Activated T-helper 1 cell treated with anti-CD3 and anti-CD28 coated beads, Interleukin-12 subunit alpha, Interleukin-12 subunit beta, Interleukin-2, Interleukin-4 antibody, amounts not matched to agents 30 ng/mL and 10 ng/mL and 1 ng/mL, durations not matched to agents 14 hours and 24 hours and 36 hours (primary cell): ENCODE measurements at regions of chrX and their contacts with region 1.

Region 1: DNA sequence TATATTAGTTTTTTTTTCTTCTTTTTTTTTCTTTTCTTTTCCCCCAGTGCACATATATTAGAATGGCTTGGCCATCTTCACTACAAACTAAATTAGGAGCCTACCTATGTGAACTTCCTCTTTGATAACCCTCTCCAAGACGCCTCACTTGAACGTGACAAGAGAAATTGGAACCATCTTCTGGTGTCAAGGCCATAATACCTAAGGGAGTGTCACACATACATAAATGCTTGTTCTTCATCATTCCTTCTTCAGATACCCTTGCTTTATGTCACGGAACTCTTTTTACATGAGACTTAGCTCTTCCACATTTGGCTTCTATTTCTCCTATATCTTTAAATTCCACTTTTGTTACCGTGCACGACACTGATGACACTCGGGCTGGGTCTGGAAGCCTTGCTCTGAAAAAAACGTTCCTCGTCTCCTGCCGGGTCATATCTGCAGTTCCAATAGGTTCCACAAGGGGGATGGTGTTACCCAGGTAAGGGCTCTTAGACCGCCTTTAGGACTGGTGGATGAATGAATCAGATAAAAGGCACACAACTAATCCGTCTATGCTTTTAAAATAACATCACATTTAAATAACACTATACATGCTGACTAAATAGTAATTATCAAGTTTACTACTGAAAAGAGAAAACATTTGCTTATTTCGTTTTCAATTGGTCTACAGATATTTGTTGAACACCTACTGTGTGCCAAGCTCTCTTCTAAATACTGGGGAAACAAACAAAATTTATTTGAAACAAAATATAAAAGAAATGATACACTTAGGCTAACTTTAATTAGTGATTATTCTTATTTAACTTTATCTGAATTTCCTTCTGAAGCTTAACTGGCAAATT is 19.9 kb downstream of the DGAT2L6 start:
- DNase-seq: peak; percentile 43
- H3K4me3 Mint-ChIP-seq: no peak overlapping the region
- H3K27ac Mint-ChIP-seq: no peak overlapping the region
- H3K4me1 Mint-ChIP-seq: peaks cover 6% of the 10 kb centered on the region
- H3K27me3 Mint-ChIP-seq: peaks cover 4% of the 10 kb centered on the region

Region 2: DNA sequence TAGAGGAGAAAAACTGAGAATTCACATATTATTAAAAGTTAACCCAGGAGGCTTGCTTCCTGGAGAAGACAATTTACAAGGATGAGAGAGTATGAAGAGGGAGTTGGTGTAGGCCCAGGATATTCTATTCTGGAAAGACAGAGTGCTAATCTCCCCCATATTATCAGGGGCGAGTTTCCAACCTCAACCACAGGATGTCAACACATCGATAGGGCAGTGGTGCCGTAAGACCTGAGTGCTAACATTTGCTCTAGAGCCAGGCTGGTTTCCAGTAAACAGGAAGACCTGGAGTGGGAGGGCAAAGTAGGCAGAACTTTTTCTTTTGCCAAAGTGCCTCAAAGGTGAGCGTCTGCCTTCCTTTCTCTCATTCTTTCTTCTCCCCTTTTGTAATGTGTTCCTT is 34.5 kb after region 1 on chrX:
- intact Hi-C with region 1: loop called (anchors 1 kb)
- DNase-seq: no peak
- H3K4me3 Mint-ChIP-seq: no peak overlapping the region
- H3K27ac Mint-ChIP-seq: peak overlapping the region; percentile 19
- H3K4me1 Mint-ChIP-seq: peaks cover 13% of the 10 kb centered on the region
- H3K27me3 Mint-ChIP-seq: peaks cover 1% of the 10 kb centered on the region

Region 3: DNA sequence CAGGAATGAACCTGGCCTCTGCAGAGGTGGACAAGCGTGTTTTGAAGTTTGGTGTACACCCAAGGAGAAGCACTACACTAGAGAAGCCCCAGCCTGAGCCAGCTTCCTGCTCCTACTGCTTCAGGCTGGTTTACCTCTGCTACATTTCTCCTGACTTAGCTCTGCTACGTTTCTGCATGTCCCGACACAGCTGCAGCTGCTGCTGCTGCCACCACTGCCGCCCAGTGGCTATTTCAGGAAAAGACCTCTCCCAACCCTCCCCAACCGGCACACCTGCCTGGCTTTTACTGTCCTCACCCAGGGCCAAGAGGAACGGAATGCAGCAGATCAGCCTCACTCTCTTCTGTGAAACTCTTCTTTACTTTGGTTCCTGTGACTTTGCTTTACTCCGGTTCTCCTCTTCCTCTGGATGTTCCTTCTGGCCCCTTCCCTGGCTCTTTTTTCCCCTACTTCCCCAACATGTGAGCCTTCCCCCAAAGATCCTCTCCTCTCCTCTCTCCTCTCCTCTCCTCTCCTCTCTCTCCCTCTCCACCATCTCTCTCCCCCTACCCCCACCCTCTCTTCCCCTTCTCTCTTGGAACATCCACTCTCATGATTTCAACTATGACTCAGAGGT is 65.9 kb after region 1 on chrX:
- intact Hi-C with region 1: loop called (anchors 1 kb)
- DNase-seq: peak; percentile 2
- H3K4me3 Mint-ChIP-seq: no peak overlapping the region
- H3K27ac Mint-ChIP-seq: no peak overlapping the region
- H3K4me1 Mint-ChIP-seq: no peaks in the 10 kb centered on the region
- H3K27me3 Mint-ChIP-seq: no peaks in the 10 kb centered on the region

Region 4: GRCh38 chrX:70433848-70434351 is 236.7 kb after region 1 on chrX:
- intact Hi-C with region 1: loop called (anchors 1 kb)
- DNase-seq: peak; percentile 64
- H3K4me3 Mint-ChIP-seq: peak overlapping the region; percentile 91
- H3K27ac Mint-ChIP-seq: peak overlapping the region; percentile 93
- H3K4me1 Mint-ChIP-seq: peaks cover 22% of the 10 kb centered on the region
- H3K27me3 Mint-ChIP-seq: peaks cover 11% of the 10 kb centered on the region